Cardiac septum (tissue), 1 donor: ENCODE measurements at regions of chr1 and their contacts with region 1.

Region 1: DNA sequence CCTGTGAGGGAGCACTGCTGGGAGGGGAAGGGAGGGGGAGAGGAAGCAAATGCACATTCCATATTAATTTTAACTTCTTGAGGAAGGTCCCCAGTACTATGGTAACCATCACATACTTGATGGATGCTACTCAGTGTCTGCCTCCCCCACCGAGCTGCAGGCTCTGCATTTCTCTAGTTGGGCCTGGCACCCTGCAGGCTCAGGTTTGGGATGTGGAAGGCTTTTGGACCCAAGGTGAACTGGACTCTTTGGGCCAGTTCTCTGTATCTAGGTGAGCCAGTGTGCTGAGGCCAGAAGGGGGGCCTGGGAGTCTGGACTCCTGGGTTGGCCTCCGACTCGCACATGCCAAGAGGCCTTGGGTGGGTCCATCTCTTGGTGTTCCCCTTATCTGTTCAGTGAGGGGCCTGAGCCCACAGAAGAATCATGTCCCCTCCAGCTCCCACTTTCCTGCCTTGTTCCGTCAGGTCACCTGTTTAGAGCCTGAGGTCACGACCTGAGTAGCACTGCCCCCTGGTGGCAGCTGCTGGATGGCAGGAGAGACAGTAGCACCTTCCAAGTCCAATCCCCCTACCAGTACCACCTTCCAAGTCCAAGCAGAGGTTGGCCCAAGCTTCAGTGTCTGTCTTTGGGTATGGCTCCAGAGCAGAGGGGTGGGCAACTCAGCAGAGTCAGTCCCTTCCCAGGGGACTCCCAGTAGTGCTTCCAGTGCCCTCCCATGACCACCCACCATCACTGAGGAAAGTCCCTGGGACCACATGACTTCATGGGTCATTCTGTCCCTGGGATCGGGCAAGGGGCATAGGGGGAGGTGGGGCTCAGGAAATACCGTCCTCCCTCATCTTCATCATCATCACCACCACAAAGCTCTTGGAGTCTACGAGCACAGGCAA is 241.8 kb downstream of the TRABD2B start:
- DNase-seq: peak; percentile 75

Region 2: GRCh38 chr1:47722909-47723580 is 32.3 kb before region 1 on chr1:
- intact Hi-C with region 1: no loop called
- DNase-seq: no peak

Region 3: GRCh38 chr1:47934243-47934805 is 179.0 kb after region 1 on chr1:
- intact Hi-C with region 1: loop called (anchors 5 kb)
- DNase-seq: peak; percentile 55